Activated CD4-positive, alpha-beta memory T cell treated with anti-CD3 and anti-CD28 coated beads, Interleukin-2, amount 10 ng/mL, durations not matched to agents 7 days and 5 days (primary cell): ENCODE measurements at regions of chr11 and their contacts with region 1.

Region 1: GRCh38 chr11:111756097-111756496 is 10.1 kb downstream of the PPP2R1B start:
- DNase-seq: no peak
- H3K4me3 Mint-ChIP-seq: no peak overlapping the region
- H3K27ac Mint-ChIP-seq: no peak overlapping the region
- H3K4me1 Mint-ChIP-seq: no peaks in the 10 kb centered on the region
- H3K27me3 Mint-ChIP-seq: no peaks in the 10 kb centered on the region

Region 2: GRCh38 chr11:111766093-111766833 is 10.2 kb after region 1 on chr11 and contains the start of gene PPP2R1B:
- CTCF ChIA-PET with region 1: no interaction called
- POLR2A ChIA-PET with region 1: interaction called, 31 read pairs
- DNase-seq: peak; percentile 73
- H3K4me3 Mint-ChIP-seq: peak within 1 kb of the TSS; percentile 100
- H3K27ac Mint-ChIP-seq: peak within 1 kb of the TSS; percentile 96
- H3K4me1 Mint-ChIP-seq: peaks cover 37% of the 10 kb centered on the region
- H3K27me3 Mint-ChIP-seq: no peaks in the 10 kb centered on the region
- total RNA-seq, gene PPP2R1B: 51.3 to 55.7 TPM